Ascending aorta (tissue), 2 donors: ENCODE measurements at regions of chr10 and their contacts with region 1.

Region 1: GRCh38 chr10:95290461-95291364 is at the start of gene PDLIM1:
- DNase-seq: peak in 1 of 2 donors; percentile 86
- H3K4me3 ChIP-seq: peak within 1 kb of the TSS; percentile 98 to 99
- H3K27ac ChIP-seq: peak within 1 kb of the TSS; percentile 88 to 89
- H3K4me1 ChIP-seq: peaks cover 8 to 35% of the 10 kb centered on the region in 2 donors
- H3K27me3 ChIP-seq: no peaks in the 10 kb centered on the region
- CTCF ChIP-seq: peak; percentile 29 to 69 (median 44)
- total RNA-seq, gene PDLIM1: 191 TPM

Region 2: GRCh38 chr10:95273393-95274312 is 17.1 kb before region 1 on chr10:
- intact Hi-C with region 1: loop called (anchors 2 kb)
- DNase-seq: peak in 1 of 2 donors; percentile 85
- H3K4me3 ChIP-seq: peak overlapping the region; percentile 27 to 39
- H3K27ac ChIP-seq: peak overlapping the region; percentile 87 to 95
- H3K4me1 ChIP-seq: peaks cover 14 to 66% of the 10 kb centered on the region in 2 donors
- H3K27me3 ChIP-seq: no peaks in the 10 kb centered on the region
- CTCF ChIP-seq: no peak

Region 3: DNA sequence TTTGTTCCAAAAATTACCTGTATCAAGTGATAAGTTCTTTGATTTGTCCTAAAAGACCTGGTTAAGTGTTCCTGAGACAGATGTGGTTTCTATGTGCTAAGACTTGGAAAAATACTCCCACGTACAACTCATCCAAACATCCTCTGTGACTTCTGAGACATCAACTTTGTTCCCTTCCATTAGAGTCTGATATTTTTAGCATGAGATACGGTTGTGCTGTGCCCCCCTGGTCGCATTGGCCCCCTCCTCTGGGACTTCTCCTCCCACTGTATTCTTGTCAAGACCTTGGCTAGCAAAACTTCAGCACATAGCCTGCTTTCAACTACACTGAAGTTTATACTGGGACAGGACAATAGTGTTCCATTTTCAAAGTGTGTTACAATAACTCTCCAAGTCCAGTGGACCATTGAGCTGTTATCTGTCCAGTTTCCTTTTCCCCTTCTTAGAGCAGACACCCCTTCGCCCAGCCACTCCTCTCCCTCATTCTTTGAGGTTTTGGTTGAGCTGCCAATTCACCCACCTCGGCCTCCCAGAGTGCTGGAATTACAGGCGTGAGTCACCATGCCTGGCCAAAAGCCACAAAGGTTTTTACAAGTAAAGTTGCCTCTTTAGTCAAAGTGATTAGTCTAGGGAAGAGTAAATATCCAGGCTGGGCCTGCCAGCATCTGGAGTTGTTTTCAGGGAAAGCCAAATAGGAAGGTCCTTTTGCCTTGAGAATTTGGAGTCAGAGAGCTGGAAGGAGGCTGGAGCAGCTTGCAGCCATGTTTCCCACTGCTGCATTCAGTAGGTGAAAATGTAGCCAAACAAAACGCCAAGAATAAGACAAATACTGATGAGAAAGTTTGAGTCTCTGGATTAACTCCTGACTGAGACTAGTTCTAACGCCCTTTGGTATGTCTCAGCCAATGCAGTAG is 17.9 kb after region 1 on chr10:
- intact Hi-C with region 1: loop called (anchors 2 kb)
- DNase-seq: peak in 1 of 2 donors; percentile 97
- H3K4me3 ChIP-seq: no peak overlapping the region
- H3K27ac ChIP-seq: peak overlapping the region; percentile 68 to 80
- H3K4me1 ChIP-seq: peaks cover 16 to 46% of the 10 kb centered on the region in 2 donors
- H3K27me3 ChIP-seq: no peaks in the 10 kb centered on the region
- CTCF ChIP-seq: no peak